K562 (cell line): ENCODE measurements at regions of chr2 and their contacts with region 1.

Region 1: DNA sequence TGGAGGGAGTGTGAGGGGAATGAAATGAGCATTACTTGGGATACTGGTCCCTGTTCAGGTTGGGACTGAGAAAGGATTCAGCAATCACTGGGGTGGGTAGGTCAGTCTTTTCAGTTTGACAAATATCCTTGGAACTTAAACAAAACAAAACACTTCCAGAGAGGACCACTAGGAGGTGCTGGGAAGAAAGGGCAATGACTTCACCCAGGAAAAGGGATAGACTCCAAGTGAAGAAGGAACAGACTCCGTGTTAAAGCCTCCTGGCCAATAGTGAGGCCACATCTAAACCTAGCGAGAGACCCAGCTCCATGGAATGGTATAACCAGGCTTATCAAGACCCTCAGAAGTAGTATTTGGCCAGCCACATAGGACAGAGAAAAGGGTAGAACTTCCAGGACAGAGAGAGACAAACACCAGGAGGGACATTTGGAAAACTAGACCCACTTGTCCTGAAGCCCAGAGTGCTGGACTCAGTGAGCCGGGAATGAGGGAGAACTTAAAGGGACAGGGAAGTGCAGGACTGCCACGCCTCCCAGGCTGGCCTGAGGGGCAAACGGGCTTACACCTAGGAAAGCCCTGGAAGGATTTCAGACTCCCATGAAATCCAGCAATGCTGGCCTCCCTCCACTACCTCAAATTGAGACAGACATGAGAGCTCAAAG is 19.6 kb upstream of the KCNG3 start:
- DNase-seq: peak; percentile 54 to 65 (median 57)
- ATAC-seq: peak; percentile 89
- H3K4me3 ChIP-seq: no peak overlapping the region
- H3K27ac ChIP-seq: no peak overlapping the region
- H3K4me1 ChIP-seq: no peaks in the 10 kb centered on the region
- H3K27me3 ChIP-seq: peaks cover 6 to 10% of the 10 kb centered on the region in 2 experiments; a peak in 4 of 5 replicates
- CTCF ChIP-seq: peak; percentile 65 to 82 (median 71)
- EP300 ChIP-seq: no peak
- POLR2A ChIP-seq: no peak
- RAD21 ChIP-seq: peak; percentile 48 to 77

Region 2: DNA sequence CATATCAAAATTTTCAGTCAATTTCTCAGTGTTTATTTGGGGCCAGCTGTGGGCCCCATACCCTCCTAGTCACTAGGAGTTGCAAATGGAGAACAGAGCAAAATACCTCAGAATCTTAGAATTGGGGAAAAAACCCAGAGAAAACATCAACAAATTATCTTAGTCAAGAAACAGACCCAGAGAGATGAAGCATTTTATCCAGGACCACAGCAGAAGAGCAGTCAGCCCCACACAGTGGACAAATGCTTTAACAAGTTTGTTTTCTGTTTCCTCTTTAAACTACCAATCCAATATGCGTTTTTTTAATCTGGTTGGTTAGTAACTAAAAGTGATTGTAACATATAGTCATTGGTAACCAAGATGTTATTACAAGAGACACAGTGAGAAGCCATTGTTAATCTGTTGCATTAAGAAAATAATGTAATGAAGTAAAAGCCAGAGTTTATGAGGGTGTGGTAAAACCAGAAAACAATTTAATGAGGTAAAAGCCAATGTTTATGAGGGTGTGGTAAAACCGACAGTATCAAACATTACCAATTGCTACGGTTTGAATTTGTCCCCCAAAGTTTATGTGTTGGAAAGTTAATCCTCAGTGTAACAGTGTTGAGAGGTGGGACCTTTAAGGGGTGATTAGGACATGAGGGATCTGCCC is 91.7 kb before region 1 on chr2:
- CTCF ChIA-PET with region 1: no interaction called
- POLR2A ChIA-PET with region 1: no interaction called
- in situ Hi-C with region 1: no loop called
- intact Hi-C with region 1: no loop called
- DNase-seq: no peak
- ATAC-seq: no peak
- H3K4me3 ChIP-seq: no peak overlapping the region
- H3K27ac ChIP-seq: no peak overlapping the region
- H3K4me1 ChIP-seq: peaks cover 0 to 3% of the 10 kb centered on the region in 2 experiments; a peak in 2 of 5 replicates
- H3K27me3 ChIP-seq: peaks cover 9 to 13% of the 10 kb centered on the region in 2 experiments; a peak in 4 of 5 replicates
- CTCF ChIP-seq: no peak
- EP300 ChIP-seq: no peak
- POLR2A ChIP-seq: no peak
- RAD21 ChIP-seq: no peak

Region 3: GRCh38 chr2:42792583-42793333 is 279.4 kb after region 1 on chr2 and contains the start of gene HAAO:
- CTCF ChIA-PET with region 1: no interaction called
- POLR2A ChIA-PET with region 1: no interaction called
- in situ Hi-C with region 1: loop called (anchors 25 kb)
- intact Hi-C with region 1: no loop called
- DNase-seq: no peak
- ATAC-seq: no peak
- H3K4me3 ChIP-seq: no peak within 1 kb of the TSS
- H3K27ac ChIP-seq: no peak within 1 kb of the TSS
- H3K4me1 ChIP-seq: peaks cover 0 to 11% of the 10 kb centered on the region in 2 experiments; a peak in 1 of 5 replicates
- H3K27me3 ChIP-seq: peaks cover 2 to 29% of the 10 kb centered on the region in 2 experiments; a peak in 4 of 5 replicates
- CTCF ChIP-seq: no peak
- EP300 ChIP-seq: no peak
- POLR2A ChIP-seq: no peak
- RAD21 ChIP-seq: no peak
- polyA plus RNA-seq, gene HAAO: not detected